Activated CD8-positive, alpha-beta T cell treated with anti-CD3 and anti-CD28 coated beads for 36 hours (primary cell): ENCODE measurements at regions of chr13 and their contacts with region 1.

Region 1: GRCh38 chr13:102580552-102581169 is 16.1 kb upstream of the TPP2 start:
- DNase-seq: peak; percentile 42
- ATAC-seq: peak; percentile 82
- H3K4me3 Mint-ChIP-seq: no peak overlapping the region
- H3K27ac Mint-ChIP-seq: no peak overlapping the region
- H3K4me1 Mint-ChIP-seq: peaks cover 12% of the 10 kb centered on the region
- H3K27me3 Mint-ChIP-seq: peaks cover 2% of the 10 kb centered on the region
- CTCF ChIP-seq: peak; percentile 86

Region 2: DNA sequence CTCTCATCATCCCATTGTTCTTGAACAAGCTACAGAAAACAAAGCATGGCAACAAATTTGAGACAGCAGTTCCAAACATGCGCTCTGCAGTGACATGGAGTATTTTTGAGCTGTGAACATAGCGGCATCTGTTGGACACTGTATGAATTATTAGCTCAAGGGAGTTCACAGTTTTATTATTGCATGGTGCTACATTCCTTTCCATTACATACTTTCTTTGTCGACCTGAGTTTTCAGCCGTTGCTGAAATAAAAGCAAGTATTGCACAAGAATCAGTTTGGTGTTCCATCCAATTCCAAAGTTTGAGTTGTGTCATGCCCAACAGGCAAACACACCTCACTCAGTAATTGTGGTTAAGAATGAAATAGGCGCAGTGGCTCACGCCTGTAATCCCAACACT is 144.3 kb after region 1 on chr13:
- CTCF ChIA-PET with region 1: interaction called, 10 read pairs
- POLR2A ChIA-PET with region 1: no interaction called
- intact Hi-C with region 1: no loop called
- DNase-seq: no peak
- ATAC-seq: no peak
- H3K4me3 Mint-ChIP-seq: no peak overlapping the region
- H3K27ac Mint-ChIP-seq: no peak overlapping the region
- H3K4me1 Mint-ChIP-seq: peaks cover 3% of the 10 kb centered on the region
- H3K27me3 Mint-ChIP-seq: peaks cover 7% of the 10 kb centered on the region
- CTCF ChIP-seq: no peak